B cell (primary cell): ENCODE measurements at regions of chr3 and their contacts with region 1.

Region 1: DNA sequence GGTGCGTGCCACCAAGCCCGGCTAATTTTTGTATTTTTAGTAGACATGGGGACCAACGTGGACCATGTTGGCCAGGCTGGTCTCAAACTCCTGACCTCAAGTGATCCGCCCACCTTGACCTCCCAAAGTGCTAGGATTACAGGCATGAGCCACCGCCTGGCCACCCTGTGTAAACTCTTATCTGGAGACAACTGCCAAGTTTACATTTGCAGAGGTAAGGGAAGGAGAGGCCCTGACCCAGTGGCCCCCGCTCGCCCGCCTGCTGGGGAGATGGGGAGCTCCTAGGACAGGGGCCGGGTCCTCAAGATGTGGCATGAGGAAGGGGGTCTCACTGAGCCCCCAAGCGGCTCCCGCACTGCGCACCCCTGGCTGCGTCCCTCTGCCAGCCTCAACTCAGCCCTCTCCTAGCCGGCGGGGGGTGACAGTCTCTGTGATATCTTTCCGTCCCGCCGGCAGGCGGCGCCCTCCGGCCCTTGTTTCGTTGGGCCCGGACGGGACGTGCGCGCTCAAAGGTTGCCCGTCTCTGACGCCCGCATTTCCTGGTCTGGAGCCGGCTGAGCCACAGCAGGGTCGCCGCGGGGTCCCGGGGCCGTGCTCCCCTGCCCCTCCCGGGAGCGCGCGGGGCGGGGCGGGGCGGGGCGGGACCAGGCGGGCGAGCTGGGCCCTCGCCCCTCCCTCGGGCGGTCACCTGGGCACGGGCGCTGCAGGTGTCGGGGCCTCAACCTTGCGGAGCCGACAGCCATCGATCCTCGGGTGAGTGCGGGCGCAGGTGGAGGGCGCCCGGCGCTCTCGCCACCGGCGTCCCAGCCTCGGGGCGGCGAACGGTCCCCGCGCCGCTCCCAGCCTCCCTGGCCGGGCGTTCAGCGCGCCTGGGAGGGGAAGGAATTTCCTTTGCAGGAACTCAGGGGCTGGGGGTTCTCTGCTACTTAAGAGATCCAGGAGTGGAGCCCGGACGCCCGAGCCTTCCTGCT is at the start of gene GPR160:
- DNase-seq: peak; percentile 90
- ATAC-seq: peak; percentile 77
- H3K4me3 ChIP-seq: peak within 1 kb of the TSS; percentile 66 to 91 (median 83)
- H3K4me3 Mint-ChIP-seq: peak within 1 kb of the TSS; percentile 93
- H3K27ac ChIP-seq: peak within 1 kb of the TSS; percentile 28 to 48
- H3K27ac Mint-ChIP-seq: peak within 1 kb of the TSS; percentile 89
- H3K4me1 ChIP-seq: peaks cover 11 to 25% of the 10 kb centered on the region in 2 donors
- H3K4me1 Mint-ChIP-seq: peaks cover 44% of the 10 kb centered on the region
- H3K27me3 ChIP-seq: no peaks in the 10 kb centered on the region
- H3K27me3 Mint-ChIP-seq: no peaks in the 10 kb centered on the region
- CTCF ChIP-seq: peak; percentile 91
- total RNA-seq, gene GPR160: 17.5 and 17.7 TPM in 2 replicates

Region 2: DNA sequence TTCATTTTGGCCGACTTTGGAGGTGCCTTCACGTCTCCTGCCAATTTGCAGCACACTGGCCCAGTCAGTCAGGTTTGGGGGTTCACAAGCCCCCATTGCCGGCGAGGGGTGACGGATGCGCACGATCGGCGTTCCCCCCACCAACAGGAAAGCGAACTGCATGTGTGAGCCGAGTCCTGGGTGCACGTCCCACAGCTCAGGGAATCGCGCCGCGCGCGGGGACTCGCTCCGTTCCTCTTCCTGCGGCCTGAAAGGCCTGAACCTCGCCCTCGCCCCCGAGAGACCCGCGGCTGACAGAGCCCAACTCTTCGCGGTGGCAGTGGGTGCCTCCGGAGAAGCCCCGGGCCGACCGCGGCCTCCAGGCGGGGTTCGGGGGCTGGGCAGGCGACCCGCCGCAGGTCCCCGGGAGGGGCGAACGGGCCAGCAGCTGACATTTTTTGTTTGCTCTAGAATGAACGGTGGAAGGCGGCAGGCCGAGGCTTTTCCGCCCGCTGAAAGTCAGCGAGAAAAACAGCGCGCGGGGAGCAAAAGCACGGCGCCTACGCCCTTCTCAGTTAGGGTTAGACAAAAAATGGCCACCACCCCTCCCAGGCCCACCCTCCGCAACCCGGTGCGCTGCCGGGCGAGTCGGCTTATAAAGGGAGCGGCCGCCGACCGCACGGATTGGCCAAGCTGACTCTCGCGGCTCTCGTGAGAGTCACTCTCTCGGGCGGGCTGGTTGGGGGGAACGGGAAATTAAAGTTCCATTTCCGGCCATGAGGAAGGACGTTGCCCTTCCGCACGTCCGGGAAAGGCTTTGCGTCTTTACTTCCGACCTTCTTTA is 273.1 kb before region 1 on chr3 and contains the start of gene TERC:
- CTCF ChIA-PET with region 1: interaction called, 3 read pairs
- POLR2A ChIA-PET with region 1: no interaction called
- intact Hi-C with region 1: loop called (anchors 2 kb)
- DNase-seq: peak; percentile 95
- ATAC-seq: peak; percentile 82
- H3K4me3 ChIP-seq: peak within 1 kb of the TSS; percentile 70 to 100 (median 87)
- H3K4me3 Mint-ChIP-seq: peak within 1 kb of the TSS; percentile 100
- H3K27ac ChIP-seq: peak within 1 kb of the TSS; percentile 95 to 98
- H3K27ac Mint-ChIP-seq: peak within 1 kb of the TSS; percentile 100
- H3K4me1 ChIP-seq: peaks cover 11 to 17% of the 10 kb centered on the region in 2 donors
- H3K4me1 Mint-ChIP-seq: peaks cover 24% of the 10 kb centered on the region
- H3K27me3 ChIP-seq: no peaks in the 10 kb centered on the region
- H3K27me3 Mint-ChIP-seq: no peaks in the 10 kb centered on the region
- CTCF ChIP-seq: no peak
- total RNA-seq, gene TERC: 10.6 and 12.5 TPM in 2 replicates

Region 3: DNA sequence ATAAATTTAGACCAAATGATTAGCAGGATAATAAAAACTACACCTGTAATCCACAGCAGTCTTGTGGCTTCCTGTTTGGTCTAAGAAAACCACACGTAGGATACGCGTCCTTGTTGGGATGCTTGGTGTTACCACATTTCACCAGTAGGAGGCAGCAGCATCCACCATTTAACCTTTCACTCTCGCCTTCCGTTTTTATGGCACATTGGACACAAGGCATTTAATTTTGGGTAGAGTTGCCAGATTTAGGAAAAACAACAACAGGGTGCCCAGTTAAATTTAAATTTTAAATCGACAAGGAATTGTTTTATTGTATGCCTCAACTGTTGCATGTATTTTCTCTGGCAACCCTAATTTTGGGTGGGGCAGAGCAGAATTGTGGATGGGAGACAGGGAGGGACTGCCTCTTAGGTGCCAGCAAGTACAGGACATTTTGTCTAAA is 174.3 kb before region 1 on chr3:
- CTCF ChIA-PET with region 1: interaction called, 4 read pairs
- POLR2A ChIA-PET with region 1: interaction called, 3 read pairs
- intact Hi-C with region 1: loop called (anchors 5 kb)
- DNase-seq: peak; percentile 87
- ATAC-seq: peak; percentile 55
- H3K4me3 ChIP-seq: no peak overlapping the region
- H3K4me3 Mint-ChIP-seq: no peak overlapping the region
- H3K27ac ChIP-seq: no peak overlapping the region
- H3K27ac Mint-ChIP-seq: peak overlapping the region; percentile 44
- H3K4me1 ChIP-seq: peaks cover 27 to 32% of the 10 kb centered on the region in 2 donors
- H3K4me1 Mint-ChIP-seq: peaks cover 23% of the 10 kb centered on the region
- H3K27me3 ChIP-seq: no peaks in the 10 kb centered on the region
- H3K27me3 Mint-ChIP-seq: no peaks in the 10 kb centered on the region
- CTCF ChIP-seq: peak; percentile 97

Region 4: DNA sequence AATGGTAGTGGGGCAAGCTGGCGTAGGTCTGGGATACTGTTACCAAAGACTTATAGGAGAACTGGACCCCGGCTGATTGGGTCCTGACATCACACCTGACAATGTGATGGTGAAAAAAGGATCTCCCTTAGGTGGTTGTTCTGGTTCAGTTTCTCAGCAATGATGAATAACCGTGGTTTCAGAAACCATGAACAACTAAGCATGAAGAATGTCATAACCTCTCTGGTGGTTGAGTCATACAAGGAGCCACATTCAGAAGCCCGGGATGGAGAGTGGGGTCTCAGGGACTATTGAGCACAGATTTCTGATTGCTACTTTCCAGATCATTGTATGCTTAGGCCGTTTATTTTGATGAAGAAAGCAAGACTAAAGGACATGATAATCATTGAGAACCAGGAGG is 17.5 kb after region 1 on chr3:
- CTCF ChIA-PET with region 1: interaction called, 30 read pairs
- POLR2A ChIA-PET with region 1: no interaction called
- intact Hi-C with region 1: loop called (anchors 2 kb)
- DNase-seq: no peak
- ATAC-seq: peak; percentile 37
- H3K4me3 ChIP-seq: peak overlapping the region in 2 of 5 experiments; percentile 18 to 21
- H3K4me3 Mint-ChIP-seq: peak overlapping the region; percentile 82
- H3K27ac ChIP-seq: no peak overlapping the region
- H3K27ac Mint-ChIP-seq: peak overlapping the region; percentile 67
- H3K4me1 ChIP-seq: peaks cover 23 to 25% of the 10 kb centered on the region in 2 donors
- H3K4me1 Mint-ChIP-seq: peaks cover 41% of the 10 kb centered on the region
- H3K27me3 ChIP-seq: no peaks in the 10 kb centered on the region
- H3K27me3 Mint-ChIP-seq: no peaks in the 10 kb centered on the region
- CTCF ChIP-seq: no peak

Region 5: DNA sequence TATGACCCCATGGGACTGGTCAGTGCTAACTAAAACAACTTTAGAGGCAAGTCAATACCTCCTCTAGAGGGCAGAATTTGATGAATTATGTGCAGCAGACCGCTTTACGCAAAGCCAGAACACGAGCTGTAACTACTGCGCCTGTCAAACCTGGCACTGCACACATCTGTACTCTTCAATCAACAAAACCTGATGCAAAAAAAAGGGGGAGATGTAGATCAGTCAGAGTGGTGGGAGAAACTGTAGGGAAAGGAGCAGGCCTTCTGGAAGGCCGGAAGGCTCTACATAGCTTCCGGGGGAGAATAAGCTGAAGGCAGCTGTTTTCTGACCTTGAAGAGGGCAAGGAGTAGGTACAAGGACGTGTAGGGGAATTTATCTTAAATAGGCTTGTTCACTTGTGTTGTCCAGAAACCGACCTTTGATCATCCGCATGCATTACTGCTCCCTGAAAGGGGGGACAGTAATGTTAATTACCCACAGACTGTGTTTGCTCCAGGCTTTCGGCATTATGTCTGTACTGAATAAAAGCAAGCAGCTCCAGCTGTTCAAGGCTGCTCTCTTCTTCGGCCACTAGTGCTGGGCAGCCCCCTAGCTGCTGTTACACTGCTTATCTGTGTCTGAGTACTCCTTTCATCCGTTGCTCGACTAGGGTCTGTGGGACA is 41.0 kb after region 1 on chr3:
- CTCF ChIA-PET with region 1: no interaction called
- POLR2A ChIA-PET with region 1: no interaction called
- intact Hi-C with region 1: no loop called
- DNase-seq: no peak
- ATAC-seq: no peak
- H3K4me3 ChIP-seq: no peak overlapping the region
- H3K4me3 Mint-ChIP-seq: no peak overlapping the region
- H3K27ac ChIP-seq: no peak overlapping the region
- H3K27ac Mint-ChIP-seq: no peak overlapping the region
- H3K4me1 ChIP-seq: peaks cover 0 to 3% of the 10 kb centered on the region in 2 donors
- H3K4me1 Mint-ChIP-seq: peaks cover 14% of the 10 kb centered on the region
- H3K27me3 ChIP-seq: no peaks in the 10 kb centered on the region
- H3K27me3 Mint-ChIP-seq: no peaks in the 10 kb centered on the region
- CTCF ChIP-seq: no peak

Region 6: GRCh38 chr3:170180908-170181879 is 143.4 kb after region 1 on chr3 and contains the start of gene PHC3:
- CTCF ChIA-PET with region 1: no interaction called
- POLR2A ChIA-PET with region 1: interaction called, 6 read pairs
- intact Hi-C with region 1: loop called (anchors 5 kb)
- DNase-seq: peak; percentile 95
- ATAC-seq: peak; percentile 82
- H3K4me3 ChIP-seq: peak within 1 kb of the TSS; percentile 61 to 98 (median 95)
- H3K4me3 Mint-ChIP-seq: peak within 1 kb of the TSS; percentile 98
- H3K27ac ChIP-seq: peak within 1 kb of the TSS; percentile 96 to 98
- H3K27ac Mint-ChIP-seq: peak within 1 kb of the TSS; percentile 100
- H3K4me1 ChIP-seq: peaks cover 20 to 25% of the 10 kb centered on the region in 2 donors
- H3K4me1 Mint-ChIP-seq: peaks cover 28% of the 10 kb centered on the region
- H3K27me3 ChIP-seq: no peaks in the 10 kb centered on the region
- H3K27me3 Mint-ChIP-seq: no peaks in the 10 kb centered on the region
- CTCF ChIP-seq: no peak
- total RNA-seq, gene PHC3: 159 and 165 TPM in 2 replicates

Region 7: GRCh38 chr3:170811928-170812591 is 774.3 kb after region 1 on chr3:
- CTCF ChIA-PET with region 1: no interaction called
- POLR2A ChIA-PET with region 1: no interaction called
- intact Hi-C with region 1: loop called (anchors 5 kb)
- DNase-seq: peak; percentile 80
- ATAC-seq: peak; percentile 81
- H3K4me3 ChIP-seq: no peak overlapping the region
- H3K4me3 Mint-ChIP-seq: no peak overlapping the region
- H3K27ac ChIP-seq: no peak overlapping the region
- H3K27ac Mint-ChIP-seq: no peak overlapping the region
- H3K4me1 ChIP-seq: no peaks in the 10 kb centered on the region
- H3K4me1 Mint-ChIP-seq: no peaks in the 10 kb centered on the region
- H3K27me3 ChIP-seq: no peaks in the 10 kb centered on the region
- H3K27me3 Mint-ChIP-seq: peaks cover 8% of the 10 kb centered on the region
- CTCF ChIP-seq: peak; percentile 87